Activated B cell treated with CpG ODN at 0.5 μM for 24 hours (primary cell): ENCODE measurements at regions of chr7 and their contacts with region 1.

Region 1: DNA sequence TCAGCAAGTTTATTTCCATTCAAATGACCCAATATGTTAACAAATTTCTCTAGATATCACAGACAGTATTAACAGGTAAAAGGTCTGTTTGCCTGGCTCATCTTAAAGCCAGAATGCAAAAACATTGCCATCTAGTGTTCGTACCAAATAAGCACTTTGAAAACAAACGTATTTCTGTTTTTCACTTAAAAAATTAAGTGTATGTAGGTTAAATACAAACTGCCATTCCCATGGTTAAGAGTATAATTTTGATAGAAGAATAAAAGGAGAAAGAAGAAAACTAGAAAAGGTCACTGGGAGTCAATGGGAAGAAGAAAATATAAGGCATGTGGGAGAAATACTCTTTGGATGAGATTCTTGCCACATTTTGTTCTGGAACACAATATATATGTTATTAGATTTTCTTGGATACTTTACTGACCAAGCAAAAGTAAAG is 51.0 kb downstream of the ORC5 start:
- DNase-seq: no peak
- ATAC-seq: no peak
- H3K4me3 Mint-ChIP-seq: no peak overlapping the region
- H3K27ac Mint-ChIP-seq: no peak overlapping the region
- H3K4me1 Mint-ChIP-seq: no peaks in the 10 kb centered on the region
- H3K27me3 Mint-ChIP-seq: no peaks in the 10 kb centered on the region
- CTCF ChIP-seq: no peak

Region 2: DNA sequence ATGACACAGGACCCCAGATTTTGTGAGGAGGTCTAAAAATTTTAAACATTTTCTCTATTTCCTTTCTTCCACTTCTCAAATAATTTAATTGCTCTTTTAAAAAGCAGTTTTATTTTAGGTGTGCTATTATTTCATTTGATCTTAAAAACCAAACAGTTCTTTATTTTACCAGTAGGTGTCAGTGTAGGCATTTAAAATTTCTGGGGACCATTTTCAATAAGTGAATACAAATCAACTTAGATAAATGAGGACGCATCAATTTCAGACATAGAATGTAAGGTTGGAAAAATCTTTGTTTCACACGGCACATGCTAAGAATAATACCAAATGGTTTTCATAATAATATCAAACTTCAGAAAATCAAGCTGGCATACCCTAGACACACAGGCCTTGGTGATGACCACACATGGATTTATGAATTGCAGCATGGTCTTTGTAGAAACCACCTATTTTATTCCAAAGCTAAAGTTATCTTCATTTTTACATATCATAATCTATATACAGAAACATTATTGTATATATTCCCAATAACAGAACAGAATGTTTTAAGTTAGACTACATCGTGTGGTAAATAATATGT is 583.3 kb before region 1 on chr7:
- CTCF ChIA-PET with region 1: interaction called, 7 read pairs
- POLR2A ChIA-PET with region 1: no interaction called
- intact Hi-C with region 1: loop called (anchors 1 kb)
- DNase-seq: no peak
- ATAC-seq: no peak
- H3K4me3 Mint-ChIP-seq: no peak overlapping the region
- H3K27ac Mint-ChIP-seq: no peak overlapping the region
- H3K4me1 Mint-ChIP-seq: no peaks in the 10 kb centered on the region
- H3K27me3 Mint-ChIP-seq: peaks cover 11% of the 10 kb centered on the region
- CTCF ChIP-seq: no peak

Region 3: GRCh38 chr7:104790440-104790839 is 633.6 kb after region 1 on chr7:
- CTCF ChIA-PET with region 1: no interaction called
- POLR2A ChIA-PET with region 1: no interaction called
- intact Hi-C with region 1: no loop called
- DNase-seq: no peak
- ATAC-seq: no peak
- H3K4me3 Mint-ChIP-seq: no peak overlapping the region
- H3K27ac Mint-ChIP-seq: no peak overlapping the region
- H3K4me1 Mint-ChIP-seq: no peaks in the 10 kb centered on the region
- H3K27me3 Mint-ChIP-seq: peaks cover 15% of the 10 kb centered on the region
- CTCF ChIP-seq: no peak